ENCODE measurements at regions of chrX and their contacts with region 1.

Region 1: GRCh38 chrX:16892504-16893362 is 22.6 kb upstream of the RBBP7 start:
- DNase-seq: peak; percentile 77
- H3K4me3 ChIP-seq: no peak overlapping the region
- H3K27ac ChIP-seq: no peak overlapping the region
- H3K4me1 ChIP-seq: no peaks in the 10 kb centered on the region
- H3K27me3 ChIP-seq: no peaks in the 10 kb centered on the region
- CTCF ChIP-seq: peak in 3 of 4 experiments; percentile 36 to 60 (median 42)
- EP300 ChIP-seq: no peak
- POLR2A ChIP-seq: no peak

Region 2: DNA sequence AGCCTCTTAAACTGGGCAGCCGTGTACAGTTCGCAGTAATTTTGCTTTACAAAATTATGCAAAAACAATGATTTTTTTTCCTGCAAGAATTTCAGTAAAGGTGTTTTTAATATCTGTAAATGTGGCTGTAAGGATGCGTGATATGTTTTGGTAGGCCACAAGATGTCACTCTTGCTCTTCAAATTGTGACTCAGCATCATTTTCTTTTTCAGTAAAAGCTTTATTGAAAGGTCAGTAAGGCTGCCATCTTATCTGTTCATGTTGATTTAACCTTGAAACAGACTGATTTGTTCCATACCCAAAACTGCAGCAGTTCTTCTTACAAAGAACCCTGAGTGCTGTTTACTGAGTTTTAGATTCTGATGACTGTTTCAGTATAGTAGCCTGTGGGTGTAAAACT is 66.5 kb before region 1 on chrX:
- intact Hi-C with region 1: loop called (anchors 5 kb)
- DNase-seq: no peak
- H3K4me3 ChIP-seq: no peak overlapping the region
- H3K27ac ChIP-seq: peak overlapping the region in 3 of 4 donors; percentile 17 to 84 (median 75)
- H3K4me1 ChIP-seq: peaks cover 0 to 24% (median 3%) of the 10 kb centered on the region in 4 donors
- H3K27me3 ChIP-seq: no peaks in the 10 kb centered on the region
- CTCF ChIP-seq: peak in 3 of 4 experiments; percentile 19 to 29 (median 27)
- EP300 ChIP-seq: no peak
- POLR2A ChIP-seq: no peak

Region 3: GRCh38 chrX:18203631-18204030 is 1310.9 kb after region 1 on chrX:
- intact Hi-C with region 1: no loop called
- DNase-seq: no peak
- H3K4me3 ChIP-seq: no peak overlapping the region
- H3K27ac ChIP-seq: no peak overlapping the region
- H3K4me1 ChIP-seq: no peaks in the 10 kb centered on the region
- H3K27me3 ChIP-seq: no peaks in the 10 kb centered on the region
- CTCF ChIP-seq: no peak
- EP300 ChIP-seq: no peak
- POLR2A ChIP-seq: no peak